Activated CD4-positive, alpha-beta memory T cell treated with anti-CD3 and anti-CD28 coated beads for 36 hours (primary cell): ENCODE measurements at regions of chr5 and their contacts with region 1.

Region 1: GRCh38 chr5:43191740-43192557 is at the start of gene NIM1K:
- DNase-seq: peak; percentile 62
- H3K4me3 Mint-ChIP-seq: peak within 1 kb of the TSS; percentile 78
- H3K27ac Mint-ChIP-seq: no peak within 1 kb of the TSS
- H3K4me1 Mint-ChIP-seq: peaks cover 31% of the 10 kb centered on the region
- H3K27me3 Mint-ChIP-seq: peaks cover 16% of the 10 kb centered on the region
- total RNA-seq, gene NIM1K: 0.75 to 1.00 TPM

Region 2: DNA sequence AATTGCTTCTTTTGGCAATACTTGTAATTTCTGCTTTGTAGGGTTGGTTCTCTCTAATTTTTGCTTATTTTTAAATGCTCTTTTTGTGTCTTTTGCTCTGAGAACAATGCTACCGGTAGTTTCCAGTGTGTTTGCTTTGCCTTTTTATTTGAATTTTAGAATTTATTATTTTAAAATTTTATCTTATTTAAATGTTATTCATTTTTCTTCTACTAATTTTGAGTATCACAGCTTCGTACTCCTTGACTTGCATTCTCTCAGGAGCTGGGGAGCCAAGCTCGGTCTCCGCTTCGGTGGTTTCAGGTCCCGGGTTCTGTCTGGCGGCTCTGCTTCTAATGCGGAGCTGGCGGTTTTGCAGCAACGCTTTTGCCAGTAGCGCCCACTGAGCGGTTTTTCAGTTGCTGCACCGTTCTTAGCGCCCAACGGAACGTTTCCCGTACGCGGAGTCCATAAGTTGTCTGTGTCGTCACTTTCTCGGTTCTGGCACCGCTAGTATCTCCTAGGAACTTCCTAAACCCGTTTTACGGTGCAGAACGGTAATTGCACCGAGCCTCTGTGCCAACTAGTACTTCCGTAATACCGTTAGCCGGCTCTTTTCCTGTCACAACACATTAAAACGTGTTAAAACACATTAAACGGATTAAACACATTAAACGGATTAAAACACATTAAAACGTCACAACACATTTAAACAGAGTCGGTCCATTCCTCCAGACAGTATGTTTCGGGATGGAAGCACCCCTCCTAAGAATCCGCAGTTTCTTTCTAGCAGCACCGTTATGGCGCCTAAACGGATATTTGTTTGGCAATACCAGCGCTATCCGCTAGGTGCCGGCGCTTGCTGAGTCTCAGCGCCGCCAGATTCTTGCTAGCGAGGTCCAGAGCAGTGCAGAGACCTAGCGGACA is 197.4 kb before region 1 on chr5:
- CTCF ChIA-PET with region 1: interaction called, 3 read pairs
- POLR2A ChIA-PET with region 1: no interaction called
- intact Hi-C with region 1: loop called (anchors 10 kb)
- DNase-seq: peak; percentile 93
- H3K4me3 Mint-ChIP-seq: peak overlapping the region; percentile 87
- H3K27ac Mint-ChIP-seq: peak overlapping the region; percentile 94
- H3K4me1 Mint-ChIP-seq: peaks cover 25% of the 10 kb centered on the region
- H3K27me3 Mint-ChIP-seq: no peaks in the 10 kb centered on the region

Region 3: GRCh38 chr5:43140286-43140685 is 51.7 kb before region 1 on chr5:
- CTCF ChIA-PET with region 1: no interaction called
- POLR2A ChIA-PET with region 1: interaction called, 3 read pairs
- intact Hi-C with region 1: loop called (anchors 5 kb)
- DNase-seq: no peak
- H3K4me3 Mint-ChIP-seq: no peak overlapping the region
- H3K27ac Mint-ChIP-seq: peak overlapping the region; percentile 34
- H3K4me1 Mint-ChIP-seq: peaks cover 41% of the 10 kb centered on the region
- H3K27me3 Mint-ChIP-seq: no peaks in the 10 kb centered on the region

Region 4: DNA sequence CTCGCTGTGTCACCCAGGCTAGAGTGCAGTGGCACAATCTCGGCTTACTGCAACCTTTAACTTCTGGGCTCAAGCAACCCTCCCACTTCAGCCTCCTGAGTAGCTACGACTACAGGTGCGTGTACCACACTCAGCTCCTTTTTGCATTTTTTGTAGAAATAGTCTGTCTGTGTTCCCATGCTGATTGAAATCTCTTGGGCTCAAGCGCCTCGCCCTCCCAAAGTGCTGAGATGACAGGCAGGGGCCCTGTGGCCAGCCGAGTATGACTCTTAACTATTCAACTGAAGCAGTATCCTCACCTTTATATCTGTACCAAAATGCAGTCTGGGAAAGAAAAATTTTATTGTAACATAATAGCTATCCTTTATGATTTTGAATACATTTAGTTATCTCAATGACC is 12.1 kb before region 1 on chr5:
- CTCF ChIA-PET with region 1: no interaction called
- POLR2A ChIA-PET with region 1: interaction called, 3 read pairs
- intact Hi-C with region 1: loop called (anchors 2 kb)
- DNase-seq: no peak
- H3K4me3 Mint-ChIP-seq: no peak overlapping the region
- H3K27ac Mint-ChIP-seq: no peak overlapping the region
- H3K4me1 Mint-ChIP-seq: no peaks in the 10 kb centered on the region
- H3K27me3 Mint-ChIP-seq: no peaks in the 10 kb centered on the region

Region 5: GRCh38 chr5:43281840-43282658 is 90.1 kb after region 1 on chr5:
- CTCF ChIA-PET with region 1: interaction called, 3 read pairs
- POLR2A ChIA-PET with region 1: no interaction called
- intact Hi-C with region 1: loop called (anchors 1 kb)
- DNase-seq: peak; percentile 62
- H3K4me3 Mint-ChIP-seq: no peak overlapping the region
- H3K27ac Mint-ChIP-seq: no peak overlapping the region
- H3K4me1 Mint-ChIP-seq: peaks cover 21% of the 10 kb centered on the region
- H3K27me3 Mint-ChIP-seq: no peaks in the 10 kb centered on the region

Region 6: DNA sequence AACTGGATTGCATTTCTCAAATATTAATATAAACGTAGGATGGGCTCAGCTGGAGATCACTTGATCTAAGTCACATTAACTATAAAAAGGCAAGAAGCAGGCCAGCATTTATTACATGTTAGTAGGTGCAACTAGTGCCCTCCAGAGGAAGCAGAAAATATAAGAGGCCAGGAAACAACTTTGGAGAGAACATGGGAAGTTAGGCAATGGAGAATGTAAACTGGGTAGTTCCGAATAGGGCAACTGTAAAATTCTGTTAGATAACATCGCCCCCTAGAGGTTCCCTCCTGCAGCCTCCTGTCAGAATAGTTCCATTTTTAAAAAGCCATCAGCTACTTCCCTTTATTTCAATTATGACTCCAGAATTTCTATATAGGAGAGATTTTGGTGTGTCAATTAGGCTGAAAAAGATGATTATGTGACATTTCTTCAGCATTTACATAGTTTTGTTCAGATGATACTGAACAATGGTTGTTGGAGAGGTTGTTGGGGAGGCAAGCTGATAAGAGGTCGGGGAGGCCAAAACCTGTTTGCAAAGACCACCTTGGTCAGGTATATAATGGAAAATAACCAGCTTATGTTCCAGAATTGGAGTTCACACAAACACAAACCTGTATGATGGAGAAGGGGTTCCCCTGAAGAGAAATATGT is 197.9 kb after region 1 on chr5:
- CTCF ChIA-PET with region 1: interaction called, 14 read pairs
- POLR2A ChIA-PET with region 1: no interaction called
- intact Hi-C with region 1: no loop called
- DNase-seq: peak; percentile 58
- H3K4me3 Mint-ChIP-seq: no peak overlapping the region
- H3K27ac Mint-ChIP-seq: no peak overlapping the region
- H3K4me1 Mint-ChIP-seq: peaks cover 31% of the 10 kb centered on the region
- H3K27me3 Mint-ChIP-seq: no peaks in the 10 kb centered on the region